HAP-1 (cell line): ENCODE measurements at regions of chr2 and their contacts with region 1.

Region 1: DNA sequence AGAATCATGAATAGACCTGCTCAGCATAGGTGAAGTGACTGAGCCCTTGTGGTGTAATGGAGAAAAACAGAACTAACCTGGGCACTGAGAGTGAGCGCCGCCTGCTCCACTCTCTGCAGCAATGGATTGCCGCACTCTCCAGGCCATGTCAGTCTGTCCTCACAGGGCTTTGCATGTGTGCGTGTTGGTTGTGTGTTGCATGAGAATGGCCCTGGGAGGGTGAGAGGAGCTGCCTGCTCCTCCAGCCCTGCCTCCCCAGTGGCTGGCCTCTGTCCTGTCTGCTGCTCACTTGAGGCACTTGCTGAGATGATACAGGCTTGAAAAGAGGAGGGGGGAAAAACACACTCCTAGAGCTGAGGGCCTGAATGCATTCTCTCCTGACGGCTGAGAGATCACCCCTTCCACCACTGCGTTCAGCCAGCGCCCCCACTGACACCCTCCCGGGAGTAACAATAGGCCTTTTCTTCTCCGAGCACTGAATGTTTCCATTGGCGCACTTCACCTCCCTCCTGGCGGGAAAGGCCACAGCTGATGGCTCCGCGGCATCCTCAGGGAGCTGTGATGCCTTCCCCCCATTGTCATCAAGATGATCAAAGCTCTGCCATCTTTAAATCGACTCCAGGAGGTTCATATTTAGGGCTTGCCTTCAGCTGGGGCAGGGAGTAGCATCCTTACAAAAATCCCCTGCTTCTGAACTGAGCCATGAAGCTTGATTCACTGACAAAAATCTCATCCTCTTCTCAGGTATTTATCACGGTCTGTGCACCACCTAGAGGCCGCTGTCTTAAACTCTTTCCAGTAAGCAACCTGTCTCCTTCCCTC is 49.9 kb upstream of the DAPL1 start:
- DNase-seq: peak; percentile 46 to 60
- H3K4me3 ChIP-seq: no peak overlapping the region
- H3K4me1 ChIP-seq: peaks cover 15% of the 10 kb centered on the region
- H3K27me3 ChIP-seq: 0 out of 2 replicates have a peak, but pooled peaks cover 2% of the 10 kb centered on the region

Region 2: DNA sequence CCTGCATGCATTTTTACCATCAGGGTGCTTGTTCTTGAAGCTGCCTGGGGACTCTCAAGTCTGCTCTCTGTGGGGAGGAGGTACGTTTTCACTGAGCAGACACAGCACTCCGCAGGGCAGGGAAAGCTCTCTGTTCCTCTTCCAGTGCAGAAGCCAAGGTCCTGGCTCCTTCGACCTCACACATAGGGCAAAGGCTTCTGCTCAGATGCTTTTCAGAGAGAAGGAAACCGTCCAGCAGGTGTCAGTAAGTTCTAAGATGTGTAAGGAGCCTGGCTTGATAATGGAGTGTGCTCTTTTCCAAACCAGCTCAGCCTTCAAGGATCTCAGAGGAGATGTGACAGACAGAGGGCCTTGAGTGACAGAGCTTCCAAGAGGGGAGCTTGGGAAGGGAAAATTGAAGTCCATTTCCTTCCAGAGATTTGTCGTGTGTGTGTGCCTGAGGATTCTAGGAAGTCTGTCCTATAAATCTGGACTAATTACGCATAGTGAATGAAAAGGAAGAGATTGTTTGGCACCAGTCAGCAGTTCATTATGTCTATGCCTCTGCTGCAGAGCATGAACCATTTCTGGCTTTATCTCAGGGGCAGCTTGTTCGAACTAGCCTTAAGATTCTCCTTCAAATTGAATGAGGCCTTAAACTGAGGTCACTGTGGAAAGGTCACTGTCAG is 710.9 kb before region 1 on chr2:
- in situ Hi-C with region 1: loop called (anchors 5 kb)
- DNase-seq: peak; percentile 41 to 66
- H3K4me3 ChIP-seq: no peak overlapping the region
- H3K4me1 ChIP-seq: no peaks in the 10 kb centered on the region
- H3K27me3 ChIP-seq: peaks cover 3% of the 10 kb centered on the region; the same call in 1 of the 2 replicates

Region 3: DNA sequence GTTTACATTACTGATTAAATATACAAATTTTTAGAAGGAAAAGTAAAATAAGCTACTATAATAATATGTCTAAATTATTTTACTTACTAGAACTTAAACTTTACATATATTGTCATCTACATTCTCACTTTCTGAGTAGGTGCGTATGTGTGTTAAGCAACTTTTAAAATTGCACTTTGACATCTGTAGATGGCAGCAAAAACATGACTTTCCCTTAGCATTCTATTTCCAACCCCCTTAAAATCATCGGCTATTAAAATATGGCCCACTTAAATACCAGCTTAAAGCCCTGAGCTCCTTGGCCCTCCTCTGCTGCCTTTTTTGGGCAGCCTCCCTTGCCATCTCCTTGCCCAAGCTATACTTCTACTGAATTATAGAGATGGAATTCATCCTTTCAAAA is 565.6 kb before region 1 on chr2:
- in situ Hi-C with region 1: loop called (anchors 25 kb)
- DNase-seq: peak in 1 of 2 experiments; percentile 38
- H3K4me3 ChIP-seq: no peak overlapping the region
- H3K4me1 ChIP-seq: no peaks in the 10 kb centered on the region
- H3K27me3 ChIP-seq: peaks cover 6% of the 10 kb centered on the region; the same call in 1 of the 2 replicates

Region 4: DNA sequence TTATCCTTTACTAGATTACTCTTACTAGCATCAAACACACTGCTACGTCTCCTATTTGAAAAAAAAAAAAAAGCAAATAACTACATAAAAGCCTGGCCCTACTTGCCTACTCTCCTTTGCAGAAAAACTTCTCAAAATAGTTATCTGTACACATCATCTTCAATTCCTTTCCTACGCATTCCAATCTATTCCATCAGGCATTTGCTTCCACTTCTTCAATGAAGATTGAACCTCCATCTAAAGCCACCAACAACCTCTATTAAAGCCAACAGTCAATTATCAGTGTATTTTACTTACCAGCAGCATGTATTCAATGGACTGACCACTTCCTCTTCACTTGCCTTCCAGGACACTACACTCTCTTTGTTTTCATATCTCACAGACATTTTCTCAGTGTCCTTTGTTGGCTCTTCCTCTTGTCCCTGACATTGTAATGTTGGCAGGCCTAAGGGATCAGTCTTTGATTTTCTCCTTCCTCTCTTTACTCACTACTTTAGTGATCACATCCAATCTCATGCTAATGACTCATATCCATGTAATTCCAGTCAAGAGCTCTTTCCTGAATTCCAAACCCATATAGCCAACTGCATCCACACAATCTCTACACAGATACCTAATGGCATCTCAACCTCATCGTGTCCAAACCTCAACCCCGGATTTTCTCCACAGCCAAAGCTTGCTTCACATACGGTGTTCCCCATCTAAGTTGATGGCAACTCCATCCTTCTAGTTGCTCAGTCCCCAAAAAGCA is 420.0 kb before region 1 on chr2:
- in situ Hi-C with region 1: no loop called
- DNase-seq: no peak
- H3K4me3 ChIP-seq: no peak overlapping the region
- H3K4me1 ChIP-seq: no peaks in the 10 kb centered on the region
- H3K27me3 ChIP-seq: 0 out of 2 replicates have a peak, but pooled peaks cover 3% of the 10 kb centered on the region

Region 5: GRCh38 chr2:158456309-158457066 is 288.8 kb before region 1 on chr2 and contains the starts of genes CCDC148 and PKP4:
- in situ Hi-C with region 1: loop called (anchors 10 kb)
- DNase-seq: peak; percentile 92 to 95
- H3K4me3 ChIP-seq: peak within 1 kb of the TSS; percentile 85
- H3K4me1 ChIP-seq: peaks cover 19% of the 10 kb centered on the region
- H3K27me3 ChIP-seq: no peaks in the 10 kb centered on the region

Region 6: GRCh38 chr2:158600155-158600802 is 145.0 kb before region 1 on chr2:
- in situ Hi-C with region 1: no loop called
- DNase-seq: no peak
- H3K4me3 ChIP-seq: no peak overlapping the region
- H3K4me1 ChIP-seq: no peaks in the 10 kb centered on the region
- H3K27me3 ChIP-seq: no peaks in the 10 kb centered on the region

Region 7: DNA sequence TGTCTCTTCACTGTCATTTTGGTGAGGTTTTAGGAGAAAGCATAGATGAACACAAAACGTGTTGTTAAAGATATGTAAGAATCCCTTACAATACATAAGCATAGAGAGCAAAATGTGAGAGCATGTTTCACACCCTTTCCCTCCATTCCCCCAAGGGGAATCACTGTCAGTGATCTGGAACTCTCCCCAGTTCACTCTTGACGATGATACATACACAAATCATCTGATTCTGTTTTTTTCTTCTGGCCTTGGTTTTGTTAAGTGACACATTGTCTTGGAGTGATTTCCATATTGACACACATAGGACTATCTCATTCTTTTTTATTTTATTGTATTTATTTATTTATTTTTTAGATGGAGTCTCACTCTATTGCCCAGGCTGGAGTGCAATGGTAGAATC is 169.5 kb after region 1 on chr2:
- in situ Hi-C with region 1: no loop called
- DNase-seq: no peak
- H3K4me3 ChIP-seq: no peak overlapping the region
- H3K4me1 ChIP-seq: peaks cover 4% of the 10 kb centered on the region; the same call in 1 of the 2 replicates
- H3K27me3 ChIP-seq: no peaks in the 10 kb centered on the region